Sciatic nerve (tissue), 2 donors: ENCODE measurements at regions of chr2 and their contacts with region 1.

Region 1: GRCh38 chr2:157838442-157839161 is 37.5 kb downstream of the ACVR1 start:
- DNase-seq: no peak
- ATAC-seq: peak; percentile 91

Region 2: DNA sequence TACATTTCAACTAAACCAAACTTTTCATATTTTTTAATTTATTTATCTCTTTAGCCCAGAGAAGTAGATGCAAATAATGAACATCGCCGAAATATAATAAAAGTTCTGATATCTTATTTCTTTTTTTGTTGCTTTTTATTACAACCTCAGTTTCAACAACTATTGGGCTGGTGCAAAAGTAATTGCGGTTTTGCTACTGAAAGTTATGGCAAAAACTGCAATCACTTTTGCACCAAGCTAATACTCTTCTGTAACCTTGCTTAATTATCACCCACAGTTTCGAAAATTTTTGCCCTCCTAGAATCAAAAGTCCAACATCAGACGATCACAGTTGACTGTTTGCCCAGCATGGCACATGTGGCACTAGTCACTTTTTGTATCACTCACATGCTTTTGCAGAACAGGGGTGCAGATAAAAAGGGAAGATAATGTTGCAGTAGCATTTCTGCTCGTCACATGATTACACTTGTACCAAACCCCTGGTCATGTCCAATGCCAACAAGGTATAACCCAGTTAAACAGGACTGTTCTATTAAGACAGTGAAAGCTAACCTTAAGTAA is 823.5 kb before region 1 on chr2:
- intact Hi-C with region 1: loop called (anchors 5 kb)
- DNase-seq: no peak
- ATAC-seq: no peak

Region 3: GRCh38 chr2:157825885-157826284 is 12.7 kb before region 1 on chr2:
- intact Hi-C with region 1: loop called (anchors 1 kb)
- DNase-seq: no peak
- ATAC-seq: peak; percentile 61